ENCODE measurements at regions of chr22 and their contacts with region 1.

Region 1: DNA sequence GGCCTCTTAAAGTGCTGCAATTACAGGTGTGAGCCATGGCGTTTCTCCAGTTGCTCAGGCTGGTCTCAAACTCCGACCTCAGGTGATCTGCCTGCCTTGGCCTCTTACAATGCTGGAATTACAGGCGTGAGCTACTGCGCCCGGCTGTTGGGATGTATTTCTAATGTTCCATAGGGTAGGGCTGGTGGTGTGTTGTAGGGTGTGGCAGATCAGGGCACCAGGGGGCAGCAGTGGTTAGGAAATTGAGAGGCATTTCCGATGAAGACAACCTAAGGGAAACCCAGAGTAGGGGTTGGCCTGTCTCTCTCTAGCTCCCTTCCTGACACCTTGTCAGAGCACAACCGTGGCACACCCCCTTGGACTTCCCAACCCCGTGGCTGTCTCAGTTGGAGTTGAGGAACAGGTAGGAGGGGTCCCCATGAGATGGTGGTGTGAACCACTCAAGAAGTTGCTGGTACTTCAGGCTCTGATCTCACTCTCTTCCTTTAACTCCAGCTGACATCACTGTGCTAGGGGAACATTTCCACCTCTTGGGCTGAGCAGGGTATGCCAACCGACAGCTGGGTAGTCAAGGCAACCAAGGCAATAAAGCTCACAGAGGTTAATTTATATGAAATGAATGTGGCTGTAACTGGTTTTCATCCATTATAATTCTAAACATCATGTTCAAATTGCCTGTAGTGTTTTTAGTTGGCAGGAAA is 33.0 kb downstream of the YWHAH start:
- DNase-seq: peak; percentile 89

Region 2: GRCh38 chr22:31947296-31947695 is 30.0 kb before region 1 on chr22:
- CTCF ChIA-PET with region 1: no interaction called
- POLR2A ChIA-PET with region 1: no interaction called
- DNase-seq: no peak

Region 3: DNA sequence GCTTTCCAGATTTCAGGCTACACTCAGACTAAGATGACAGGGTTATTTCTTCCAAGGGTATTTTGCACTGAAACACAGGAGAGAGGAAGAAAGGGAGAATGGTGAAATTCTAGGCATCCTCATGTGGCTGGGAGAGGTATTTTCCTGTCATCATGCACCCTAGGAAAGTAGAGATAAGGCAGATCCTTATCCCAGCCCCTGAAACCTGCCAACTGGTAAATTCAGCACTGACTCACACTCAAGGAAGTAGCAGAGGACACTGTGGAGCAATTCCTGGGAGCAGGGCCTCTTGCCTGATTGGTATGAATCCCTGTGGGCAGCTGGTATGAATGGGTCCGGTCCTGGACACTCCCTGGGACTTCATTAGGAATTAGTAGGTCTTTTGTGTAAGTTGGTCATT is 28.2 kb after region 1 on chr22:
- CTCF ChIA-PET with region 1: no interaction called
- POLR2A ChIA-PET with region 1: no interaction called
- DNase-seq: no peak

Region 4: GRCh38 chr22:32080904-32081303 is 103.6 kb after region 1 on chr22:
- CTCF ChIA-PET with region 1: interaction called, 11 read pairs
- POLR2A ChIA-PET with region 1: no interaction called
- DNase-seq: peak; percentile 71

Region 5: GRCh38 chr22:32265882-32266767 is 288.8 kb after region 1 on chr22:
- CTCF ChIA-PET with region 1: interaction called, 10 read pairs
- POLR2A ChIA-PET with region 1: no interaction called
- DNase-seq: peak; percentile 82

Measured in HEK293T (cell line).